HEK293T (cell line): ENCODE measurements at regions of chrX and their contacts with region 1.

Region 1: DNA sequence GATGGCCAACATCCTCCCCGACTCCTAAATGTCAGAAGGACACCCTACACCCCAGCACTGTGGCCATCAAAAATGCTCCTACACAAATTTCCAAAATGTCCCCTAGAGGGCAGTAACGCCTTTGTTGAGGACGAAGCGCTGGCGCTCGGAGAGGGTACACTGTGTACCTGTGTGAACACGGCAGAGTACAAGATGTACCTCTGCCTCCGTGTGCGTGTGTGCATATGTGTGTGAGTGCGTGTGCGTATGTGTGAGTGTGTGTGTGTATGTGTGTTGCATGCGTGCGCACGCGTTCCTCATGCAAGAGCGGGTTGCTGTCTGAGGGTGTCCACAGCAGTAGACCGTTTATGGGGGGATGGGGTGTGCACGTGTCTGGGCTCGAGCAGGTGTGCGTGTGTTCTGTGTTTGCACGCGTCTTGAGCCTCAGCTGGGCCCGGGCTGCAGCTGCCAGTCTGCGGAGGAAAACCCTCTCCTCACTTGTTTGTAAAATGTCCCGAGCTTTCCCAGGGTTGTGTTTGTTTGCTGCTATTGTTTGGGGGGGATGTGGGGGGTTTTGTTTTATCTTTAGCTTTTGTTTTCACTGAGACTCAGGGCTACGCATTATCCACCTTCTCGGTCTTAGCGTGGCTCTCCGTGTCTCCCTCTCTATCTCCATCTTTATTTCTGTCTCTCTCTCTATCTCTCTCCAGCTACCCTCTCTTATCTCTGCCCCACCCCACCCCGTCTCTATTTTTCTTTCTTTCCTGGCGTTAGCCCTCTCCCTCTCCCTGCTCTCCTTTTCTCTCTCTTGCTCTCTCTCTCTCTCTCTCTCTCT is 10.4 kb upstream of the TSPYL2 start:
- DNase-seq: peak; percentile 72

Region 2: GRCh38 chrX:53081925-53082772 is 10.3 kb after region 1 on chrX and contains the start of gene TSPYL2:
- CTCF ChIA-PET with region 1: interaction called, 3 read pairs
- POLR2A ChIA-PET with region 1: interaction called, 12 read pairs
- DNase-seq: peak; percentile 88

Region 3: DNA sequence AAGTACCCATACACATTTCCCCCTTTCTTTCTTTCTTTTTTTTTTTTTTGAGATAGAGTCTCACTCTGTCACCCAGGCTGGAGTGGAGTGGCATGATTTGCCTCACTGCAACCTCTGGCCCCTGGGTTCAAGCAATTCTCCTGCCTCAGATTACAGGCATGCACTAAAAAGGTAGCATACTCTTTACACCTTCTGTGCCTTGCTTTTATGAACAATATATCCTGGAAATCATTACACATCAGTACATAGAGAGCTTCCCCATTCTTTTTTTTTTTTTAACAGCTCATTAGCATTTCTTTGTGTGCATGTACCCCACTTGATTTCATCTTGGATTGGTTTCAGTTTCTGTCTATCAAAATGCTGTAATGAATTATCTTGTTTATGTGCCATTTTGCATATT is 381.0 kb after region 1 on chrX:
- CTCF ChIA-PET with region 1: no interaction called
- POLR2A ChIA-PET with region 1: no interaction called
- DNase-seq: no peak